Prostate gland (tissue), 2 donors: ENCODE measurements at regions of chr7 and their contacts with region 1.

Region 1: DNA sequence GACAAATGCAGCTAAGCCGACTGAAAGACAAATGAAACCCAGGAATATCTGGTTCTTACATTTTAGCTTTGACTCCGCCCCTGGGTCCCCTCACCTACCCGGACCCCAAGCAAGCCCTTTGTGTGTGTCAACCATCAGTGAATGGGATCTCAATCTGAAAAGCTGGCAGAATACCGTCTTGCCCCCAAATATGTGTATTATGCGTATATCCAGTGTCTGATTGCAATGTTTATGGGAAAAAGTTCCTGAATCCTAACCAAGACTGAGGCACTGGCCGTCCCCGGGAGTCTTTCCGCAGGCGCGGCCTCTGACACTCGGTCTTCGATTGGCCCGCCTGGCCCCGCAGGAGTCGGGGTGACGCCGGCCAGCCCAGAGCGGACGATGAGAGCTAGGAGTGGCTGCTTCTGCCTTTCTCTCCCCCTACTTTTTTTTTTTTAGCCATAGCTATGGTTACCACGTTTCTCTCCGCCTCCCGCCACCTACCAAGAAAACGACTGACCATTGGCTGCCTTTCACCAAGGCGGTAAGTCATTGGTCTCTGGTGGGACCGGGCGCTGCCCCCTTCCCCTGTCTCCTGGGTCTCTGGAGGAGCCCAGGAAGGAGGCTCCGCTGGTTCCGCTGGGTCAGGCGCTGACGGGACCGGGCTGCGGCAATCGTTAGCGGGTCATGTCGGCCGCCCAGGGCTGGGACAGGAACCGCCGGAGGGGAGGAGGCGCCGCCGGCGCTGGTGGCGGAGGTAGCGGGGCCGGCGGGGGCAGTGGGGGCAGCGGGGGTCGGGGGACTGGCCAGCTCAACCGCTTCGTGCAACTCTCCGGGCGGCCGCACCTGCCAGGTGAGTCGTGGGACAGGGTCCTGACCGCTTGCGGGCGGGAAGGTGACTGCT is at the start of gene KLHDC10:
- DNase-seq: peak; percentile 97
- H3K4me3 ChIP-seq: peak within 1 kb of the TSS; percentile 61 to 97
- H3K27ac ChIP-seq: peak within 1 kb of the TSS; percentile 88 to 89
- H3K4me1 ChIP-seq: peaks cover 2% of the 10 kb centered on the region
- H3K27me3 ChIP-seq: no peaks in the 10 kb centered on the region
- CTCF ChIP-seq: no peak
- POLR2A ChIP-seq: peak; percentile 48
- total RNA-seq, gene KLHDC10: 18.7 to 34.7 TPM

Region 2: GRCh38 chr7:130668257-130669084 is 598.3 kb after region 1 on chr7 and contains the start of gene COPG2:
- intact Hi-C with region 1: loop called (anchors 2 kb)
- DNase-seq: peak; percentile 78
- H3K4me3 ChIP-seq: peak within 1 kb of the TSS; percentile 70 to 77
- H3K27ac ChIP-seq: peak within 1 kb of the TSS; percentile 77 to 83
- H3K4me1 ChIP-seq: no peaks in the 10 kb centered on the region
- H3K27me3 ChIP-seq: no peaks in the 10 kb centered on the region
- CTCF ChIP-seq: no peak
- POLR2A ChIP-seq: peak; percentile 19
- total RNA-seq, gene COPG2: 15.3 to 46.1 TPM

Region 3: GRCh38 chr7:130758429-130759056 is 688.3 kb after region 1 on chr7:
- intact Hi-C with region 1: loop called (anchors 10 kb)
- DNase-seq: no peak
- H3K4me3 ChIP-seq: no peak overlapping the region
- H3K27ac ChIP-seq: no peak overlapping the region
- H3K4me1 ChIP-seq: no peaks in the 10 kb centered on the region
- H3K27me3 ChIP-seq: no peaks in the 10 kb centered on the region
- CTCF ChIP-seq: peak; percentile 45 to 61 (median 54)
- POLR2A ChIP-seq: no peak